Heart right ventricle (tissue), 16 donors: ENCODE measurements at regions of chr2 and their contacts with region 1.

Region 1: DNA sequence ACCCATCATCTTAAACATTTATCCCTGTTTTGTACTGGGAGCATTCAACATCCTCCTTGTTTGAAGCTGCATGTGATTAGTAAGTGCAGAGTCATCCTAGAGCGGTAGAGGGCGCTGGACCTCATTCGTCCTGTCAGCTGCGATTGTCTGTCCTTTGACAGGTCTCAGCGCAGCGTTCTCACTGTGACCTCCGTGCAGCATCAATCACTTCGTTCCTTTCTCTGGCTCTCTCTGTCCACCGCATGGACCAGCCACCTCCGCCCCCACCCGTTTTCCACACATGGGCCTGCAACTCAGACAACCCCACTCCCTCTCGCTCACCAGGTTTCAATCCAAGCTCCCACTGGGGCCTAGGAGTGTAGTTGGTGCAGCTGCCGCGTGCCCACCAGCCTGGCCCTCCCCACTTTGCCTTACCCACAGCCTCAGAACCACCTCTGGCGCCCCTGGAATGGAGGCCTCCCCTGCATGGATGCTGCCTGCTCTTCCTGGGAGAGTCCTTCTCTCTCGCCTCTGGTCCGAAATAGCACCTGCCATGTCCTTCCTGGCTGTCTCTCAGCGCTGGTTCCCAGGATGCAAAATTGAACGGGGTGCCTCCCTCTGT is 90.5 kb downstream of the NDUFA10 start:
- DNase-seq: peak; percentile 48 to 69
- ATAC-seq: peak; percentile 44 to 80 (median 71)
- H3K4me3 ChIP-seq: no peak overlapping the region
- H3K27ac ChIP-seq: no peak overlapping the region
- H3K4me1 ChIP-seq: peaks cover 0 to 15% (median 0%) of the 10 kb centered on the region in 9 donors
- H3K27me3 ChIP-seq: peaks cover 0 to 17% (median 0%) of the 10 kb centered on the region in 7 donors
- CTCF ChIP-seq: peak; percentile 50 to 85 (median 77)

Region 2: DNA sequence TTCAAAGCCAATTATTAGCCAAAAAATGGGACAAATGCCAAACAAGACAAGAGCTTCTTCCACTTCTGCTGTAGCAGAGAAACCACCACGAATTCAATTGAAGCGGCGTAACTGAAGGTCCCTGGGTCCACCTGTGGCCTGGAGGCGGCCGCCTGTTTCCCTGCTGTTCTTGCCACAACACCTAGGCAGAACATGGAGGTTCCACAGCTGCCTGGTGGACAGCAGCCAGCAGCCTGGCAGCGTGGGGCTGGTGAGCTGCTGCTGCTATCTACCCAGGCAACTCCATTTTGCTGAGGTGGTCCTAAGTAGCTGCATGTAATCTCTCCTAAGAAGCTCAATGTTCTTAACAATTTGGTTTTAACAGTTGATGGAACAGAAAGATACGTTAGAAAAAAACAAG is 23.7 kb after region 1 on chr2:
- intact Hi-C with region 1: loop called in 1 of 10 experiments (anchors 1 kb)
- DNase-seq: no peak
- ATAC-seq: peak in 1 of 8 donors; percentile 21
- H3K4me3 ChIP-seq: no peak overlapping the region
- H3K27ac ChIP-seq: peak overlapping the region in 4 of 10 donors; percentile 21 to 74 (median 46)
- H3K4me1 ChIP-seq: peaks cover 3 to 54% (median 30%) of the 10 kb centered on the region in 9 donors
- H3K27me3 ChIP-seq: no peaks in the 10 kb centered on the region
- CTCF ChIP-seq: no peak

Region 3: GRCh38 chr2:239979243-239980023 is 44.8 kb after region 1 on chr2:
- intact Hi-C with region 1: loop called in 4 of 10 experiments (anchors 5 to 10 kb)
- DNase-seq: no peak
- ATAC-seq: peak in 7 of 8 donors; percentile 45 to 71 (median 49)
- H3K4me3 ChIP-seq: no peak overlapping the region
- H3K27ac ChIP-seq: no peak overlapping the region
- H3K4me1 ChIP-seq: peaks cover 0 to 8% (median 0%) of the 10 kb centered on the region in 9 donors
- H3K27me3 ChIP-seq: no peaks in the 10 kb centered on the region
- CTCF ChIP-seq: peak in 6 of 9 donors; percentile 17 to 36 (median 23)

Region 4: GRCh38 chr2:239991689-239992314 is 57.1 kb after region 1 on chr2:
- intact Hi-C with region 1: loop called in 6 of 10 experiments (anchors 2 to 10 kb)
- DNase-seq: no peak
- ATAC-seq: peak in 4 of 8 donors; percentile 25 to 75 (median 56)
- H3K4me3 ChIP-seq: no peak overlapping the region
- H3K27ac ChIP-seq: no peak overlapping the region
- H3K4me1 ChIP-seq: no peaks in the 10 kb centered on the region
- H3K27me3 ChIP-seq: no peaks in the 10 kb centered on the region
- CTCF ChIP-seq: peak; percentile 66 to 91 (median 82)